A549 (cell line): ENCODE measurements at regions of chr12 and their contacts with region 1.

Region 1: DNA sequence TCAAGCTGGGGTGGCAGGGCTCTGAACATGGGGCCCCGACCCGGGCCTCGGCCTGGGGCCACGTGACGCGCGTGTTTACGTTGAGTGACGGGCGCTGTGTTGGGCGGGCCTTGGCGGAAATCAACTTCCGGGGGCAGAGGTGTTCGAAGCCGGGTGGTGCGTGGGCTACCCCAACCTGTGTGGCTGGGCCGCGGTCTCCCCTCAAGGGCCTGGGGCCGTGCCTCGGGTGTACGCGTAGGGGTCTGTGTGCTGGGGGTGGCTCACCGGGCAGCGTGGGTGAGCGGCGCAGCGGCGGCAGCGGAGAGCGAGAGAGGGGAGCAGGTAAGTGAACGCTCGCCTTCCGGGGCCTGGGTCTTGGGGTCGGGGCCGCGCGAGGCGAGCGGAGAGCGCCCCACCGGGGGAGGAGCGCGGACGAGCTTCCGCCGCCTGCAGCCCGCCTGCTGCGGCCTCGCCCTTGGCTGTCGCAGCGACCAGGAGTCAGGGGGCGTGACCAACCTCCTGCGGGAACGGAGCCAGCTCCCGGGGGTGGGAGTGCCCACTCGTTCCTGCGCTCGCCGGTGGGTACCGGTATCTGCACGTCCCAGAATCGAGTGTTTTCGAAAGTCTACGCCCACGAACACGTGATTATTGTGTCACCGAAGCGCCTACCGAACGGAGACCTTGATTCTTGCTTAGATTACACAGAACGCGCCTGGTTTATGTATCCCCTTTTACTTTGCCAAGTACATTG is at the start of gene CCDC91:
- DNase-seq: peak; percentile 69 to 92
- ATAC-seq: peak; percentile 94 to 95
- H3K4me3 ChIP-seq: peak within 1 kb of the TSS; percentile 91
- H3K27ac ChIP-seq: peak within 1 kb of the TSS; percentile 98 to 99
- H3K4me1 ChIP-seq: peaks cover 9% of the 10 kb centered on the region
- CTCF ChIP-seq: no peak
- EP300 ChIP-seq: no peak
- POLR2A ChIP-seq: peak; percentile 55
- RAD21 ChIP-seq: peak in 1 of 2 experiments; percentile 29; a peak in 2 of 5 replicates
- polyA plus RNA-seq, gene CCDC91: 38.1 and 48.1 TPM in 2 replicates

Region 2: DNA sequence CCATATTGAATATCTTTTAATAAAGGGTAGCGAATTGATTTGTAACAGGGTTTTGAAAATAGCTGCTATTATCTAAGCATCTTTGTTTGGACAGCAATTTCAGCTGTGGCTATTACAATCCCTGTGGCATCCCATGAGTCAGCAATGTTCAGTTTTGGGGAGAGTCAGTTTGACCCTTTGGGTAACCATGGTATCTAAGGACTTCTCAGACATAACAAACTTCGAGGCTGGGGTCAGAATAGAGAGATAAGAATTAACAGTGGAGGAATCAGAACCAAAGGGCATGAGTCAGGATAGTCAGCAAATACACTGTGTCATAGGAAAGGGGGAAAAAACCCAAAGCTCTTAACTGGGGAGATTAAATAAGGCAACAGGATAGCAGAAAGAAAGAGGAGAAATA is 206.2 kb before region 1 on chr12:
- CTCF ChIA-PET with region 1: no interaction called
- POLR2A ChIA-PET with region 1: interaction called, 11 read pairs
- DNase-seq: peak; percentile 60 to 88
- ATAC-seq: peak; percentile 95 to 98
- H3K4me3 ChIP-seq: no peak overlapping the region
- H3K27ac ChIP-seq: peak overlapping the region; percentile 74 to 84
- H3K4me1 ChIP-seq: peaks cover 38% of the 10 kb centered on the region
- CTCF ChIP-seq: no peak
- EP300 ChIP-seq: peak; percentile 36 to 53; a peak in 2 of 5 replicates
- POLR2A ChIP-seq: no peak
- RAD21 ChIP-seq: peak in 1 of 2 experiments; percentile 30; a peak in 2 of 5 replicates

Region 3: DNA sequence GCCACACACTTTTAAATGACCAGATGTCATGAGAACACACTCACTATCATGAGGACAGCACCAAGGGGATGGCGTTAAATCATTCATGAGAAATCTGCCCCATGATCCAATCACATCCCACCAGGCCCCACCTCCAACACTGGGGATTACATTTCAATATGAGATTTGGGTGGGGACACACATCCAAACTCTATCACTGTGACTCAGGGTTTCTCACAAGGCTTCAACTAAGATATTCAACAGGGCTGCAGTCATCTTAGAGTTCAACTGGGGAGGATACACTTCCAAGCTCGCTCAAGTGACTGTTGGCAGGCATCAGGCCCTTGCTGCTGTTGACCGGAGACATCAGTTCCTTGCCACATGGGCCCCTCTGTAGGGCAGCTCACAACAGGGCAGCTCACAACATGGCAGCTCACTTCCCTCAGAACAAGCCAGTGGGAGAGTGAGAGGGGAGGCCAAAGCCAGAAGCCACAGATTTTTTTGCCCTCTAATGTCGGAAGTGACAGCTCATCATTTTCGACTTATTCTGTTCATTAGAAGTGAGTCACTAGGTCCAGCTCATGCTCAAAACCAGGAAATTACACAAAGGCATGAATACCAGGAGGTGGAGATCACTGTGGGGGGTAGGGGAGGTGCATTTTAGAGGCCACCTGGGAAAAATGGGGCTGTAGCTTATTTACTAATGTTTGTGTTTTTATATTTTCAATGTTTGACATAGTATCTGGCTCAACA is 167.2 kb before region 1 on chr12:
- CTCF ChIA-PET with region 1: no interaction called
- POLR2A ChIA-PET with region 1: interaction called, 14 read pairs
- DNase-seq: peak in 1 of 2 experiments; percentile 87
- ATAC-seq: peak; percentile 76 to 87
- H3K4me3 ChIP-seq: no peak overlapping the region
- H3K27ac ChIP-seq: peak overlapping the region; percentile 80 to 90
- H3K4me1 ChIP-seq: peaks cover 64% of the 10 kb centered on the region
- CTCF ChIP-seq: no peak
- EP300 ChIP-seq: peak; percentile 68 to 74; a peak in 2 of 5 replicates
- POLR2A ChIP-seq: no peak
- RAD21 ChIP-seq: peak; percentile 22 to 41; a peak in 3 of 5 replicates